IMR-90 (cell line): ENCODE measurements at regions of chr22 and their contacts with region 1.

Region 1: DNA sequence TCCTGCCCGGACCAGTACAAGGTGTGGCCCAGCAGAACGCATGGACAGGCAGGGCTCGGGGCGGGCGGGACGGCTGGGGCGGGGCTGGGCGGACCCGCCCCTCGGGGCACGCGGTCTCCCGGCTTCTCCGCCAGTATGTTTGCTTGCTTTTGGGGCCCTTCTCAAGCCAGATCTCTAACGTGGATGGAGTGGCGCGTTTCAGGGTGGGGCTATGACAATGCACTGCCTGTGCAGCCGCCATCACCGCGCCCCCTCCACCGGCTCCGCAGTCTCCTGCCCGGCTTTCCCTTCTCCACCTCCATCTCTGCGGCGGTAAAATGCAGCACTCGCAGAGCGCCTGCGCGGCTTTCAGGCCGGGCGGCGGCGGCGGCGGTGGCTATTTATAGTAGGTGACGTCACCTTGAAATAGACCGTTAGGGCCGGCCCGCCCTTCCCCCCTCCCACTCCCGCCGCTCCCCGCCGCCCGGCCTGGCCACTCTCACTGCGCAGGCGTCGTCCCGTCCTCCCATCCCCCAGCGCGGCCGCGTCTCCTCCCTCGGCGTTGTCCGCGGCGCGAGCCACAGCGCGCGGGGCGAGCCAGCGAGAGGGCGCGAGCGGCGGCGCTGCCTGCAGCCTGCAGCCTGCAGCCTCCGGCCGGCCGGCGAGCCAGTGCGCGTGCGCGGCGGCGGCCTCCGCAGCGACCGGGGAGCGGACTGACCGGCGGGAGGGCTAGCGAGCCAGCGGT is at the start of gene YWHAH:
- DNase-seq: peak; percentile 89
- ATAC-seq: peak; percentile 91
- H3K4me3 ChIP-seq: peak within 1 kb of the TSS; percentile 79
- H3K27ac ChIP-seq: peak within 1 kb of the TSS; percentile 94
- H3K4me1 ChIP-seq: peaks cover 11% of the 10 kb centered on the region
- H3K27me3 ChIP-seq: no peaks in the 10 kb centered on the region
- CTCF ChIP-seq: 0 out of 2 replicates have a peak, but pooled peaks have one; percentile 2
- POLR2A ChIP-seq: peak; percentile 97
- RAD21 ChIP-seq: no peak
- total RNA-seq, gene YWHAH: 173 and 186 TPM in 2 replicates

Region 2: GRCh38 chr22:31846161-31847115 is 97.7 kb before region 1 on chr22:
- CTCF ChIA-PET with region 1: no interaction called
- POLR2A ChIA-PET with region 1: no interaction called
- dilution Hi-C with region 1: no loop called
- in situ Hi-C with region 1: no loop called
- intact Hi-C with region 1: loop called (anchors 1 kb)
- DNase-seq: peak; percentile 96
- ATAC-seq: peak; percentile 88
- H3K4me3 ChIP-seq: no peak overlapping the region
- H3K27ac ChIP-seq: peak overlapping the region; percentile 84
- H3K4me1 ChIP-seq: peaks cover 9% of the 10 kb centered on the region
- H3K27me3 ChIP-seq: no peaks in the 10 kb centered on the region
- CTCF ChIP-seq: peak; percentile 21; the same call in 1 of the 2 replicates
- POLR2A ChIP-seq: no peak
- RAD21 ChIP-seq: no peak